Endothelial cell of umbilical vein (primary cell): ENCODE measurements at regions of chr7 and their contacts with region 1.

Region 1: DNA sequence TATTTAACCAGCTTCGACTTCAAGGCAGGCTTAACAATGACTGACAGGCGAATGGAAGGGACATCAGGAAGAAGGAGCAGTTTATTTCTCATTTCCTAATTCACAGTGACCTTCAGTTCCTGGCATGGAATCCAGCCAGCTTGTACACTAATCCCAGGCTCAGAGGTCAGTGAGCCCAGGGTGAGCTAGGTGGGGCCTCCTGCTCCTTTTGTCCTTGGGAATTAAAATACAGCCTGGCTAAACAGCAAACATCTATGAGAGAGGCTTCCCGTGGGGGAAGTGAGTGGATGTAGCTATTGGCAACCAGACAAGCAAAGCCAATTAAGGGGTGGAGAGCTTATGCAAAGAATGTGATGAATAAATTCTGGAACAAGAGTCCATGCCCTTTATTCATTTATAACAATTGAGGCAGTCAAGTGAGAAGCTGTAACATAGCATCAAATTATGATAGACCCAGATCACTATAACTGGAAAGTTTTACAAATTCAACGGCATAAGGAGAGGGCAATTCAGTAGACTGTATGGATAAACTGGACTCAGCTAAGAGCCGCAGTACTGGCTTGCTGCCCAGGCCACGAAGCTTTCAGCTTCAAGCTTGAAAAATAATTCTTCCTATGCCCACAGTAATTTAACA is 57.1 kb downstream of the STK17A start:
- DNase-seq: peak; percentile 98
- H3K4me3 ChIP-seq: no peak overlapping the region
- H3K27ac ChIP-seq: peak overlapping the region; percentile 97
- H3K4me1 ChIP-seq: peaks cover 47% of the 10 kb centered on the region
- H3K27me3 ChIP-seq: no peaks in the 10 kb centered on the region
- CTCF ChIP-seq: no peak
- POLR2A ChIP-seq: no peak

Region 2: DNA sequence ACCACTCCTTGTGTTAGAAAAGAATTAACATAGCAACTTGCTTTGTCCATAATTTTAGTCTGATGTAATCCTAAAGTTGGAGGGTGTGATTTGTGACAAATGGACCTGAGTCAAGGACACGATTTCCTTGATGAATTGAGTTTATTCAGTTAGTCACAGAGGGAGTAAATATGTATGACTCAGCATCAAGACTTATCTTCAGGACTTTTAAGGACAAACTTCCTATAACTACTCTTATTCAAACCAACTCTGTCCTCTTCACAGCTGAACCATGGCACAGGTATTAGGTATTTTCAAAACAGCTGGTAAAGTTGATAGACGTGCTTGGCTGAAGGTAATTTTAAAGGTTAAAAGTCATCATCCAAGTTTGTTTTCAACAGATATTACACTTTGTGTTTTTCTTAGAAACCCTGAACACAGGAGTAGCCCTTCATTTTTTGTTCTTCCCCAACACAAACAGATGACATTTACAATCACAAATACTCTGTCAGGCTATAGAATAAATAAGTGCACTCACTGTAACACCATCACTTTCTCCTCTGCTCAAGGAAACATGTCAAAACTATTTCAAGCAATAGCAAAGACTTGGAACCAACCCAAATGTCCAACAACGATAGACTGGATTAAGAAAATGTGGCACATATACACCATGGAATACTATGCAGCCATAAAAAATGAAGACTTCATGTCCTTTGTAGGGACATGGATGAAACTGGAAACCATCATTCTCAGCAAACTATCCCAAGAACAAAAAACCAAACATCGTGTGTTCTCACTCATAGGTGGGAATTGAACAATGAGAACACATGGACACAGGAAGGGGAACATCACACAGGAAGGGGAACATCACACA is 34.8 kb after region 1 on chr7:
- CTCF ChIA-PET with region 1: no interaction called
- POLR2A ChIA-PET with region 1: no interaction called
- dilution Hi-C with region 1: no loop called
- intact Hi-C with region 1: loop called (anchors 1 kb)
- DNase-seq: peak; percentile 83
- H3K4me3 ChIP-seq: no peak overlapping the region
- H3K27ac ChIP-seq: peak overlapping the region; percentile 64
- H3K4me1 ChIP-seq: peaks cover 20% of the 10 kb centered on the region
- H3K27me3 ChIP-seq: no peaks in the 10 kb centered on the region
- CTCF ChIP-seq: no peak
- POLR2A ChIP-seq: no peak

Region 3: DNA sequence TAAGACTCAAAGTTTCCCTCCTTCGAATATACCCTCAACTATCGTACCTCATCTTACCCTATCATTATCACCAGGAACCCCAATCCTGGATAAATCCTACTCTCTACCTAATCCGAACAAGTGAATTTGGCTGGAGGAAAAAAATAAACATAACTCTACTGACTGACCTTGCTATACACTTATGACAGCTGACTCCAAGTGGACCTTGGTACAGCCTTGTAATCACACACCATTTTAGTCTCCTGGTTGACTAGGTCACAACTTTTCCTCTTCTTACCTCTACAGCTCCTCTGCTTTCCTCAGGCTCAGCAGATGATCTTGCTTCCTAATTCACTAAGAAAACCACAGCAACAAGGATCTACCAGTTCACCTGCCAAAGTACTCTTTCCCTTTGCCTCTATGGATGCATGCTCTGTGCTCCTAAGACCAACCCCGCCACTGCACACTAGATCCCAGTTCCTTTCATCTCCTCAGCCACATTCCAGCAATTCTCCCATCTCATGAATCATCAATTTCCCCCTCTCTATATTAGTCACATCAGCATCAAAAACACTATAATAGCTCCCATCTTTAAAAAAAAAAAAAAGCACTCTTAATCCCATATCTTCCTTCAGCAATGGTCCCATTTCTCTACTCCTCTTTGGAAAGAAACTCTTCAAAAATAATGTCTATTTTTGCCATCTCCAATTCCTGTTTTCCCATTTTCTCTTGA is 53.9 kb after region 1 on chr7:
- CTCF ChIA-PET with region 1: interaction called, 130 read pairs
- POLR2A ChIA-PET with region 1: no interaction called
- dilution Hi-C with region 1: no loop called
- intact Hi-C with region 1: loop called (anchors 1 kb)
- DNase-seq: peak; percentile 73
- H3K4me3 ChIP-seq: no peak overlapping the region
- H3K27ac ChIP-seq: peak overlapping the region; percentile 59
- H3K4me1 ChIP-seq: peaks cover 16% of the 10 kb centered on the region
- H3K27me3 ChIP-seq: no peaks in the 10 kb centered on the region
- CTCF ChIP-seq: no peak
- POLR2A ChIP-seq: no peak